ENCODE measurements at regions of chr16 and their contacts with region 1.

Region 1: GRCh38 chr16:78770353-78771091 is 671.1 kb downstream of the WWOX start:
- DNase-seq: peak; percentile 88
- H3K4me3 Mint-ChIP-seq: no peak overlapping the region
- H3K27ac Mint-ChIP-seq: peak overlapping the region; percentile 29
- H3K4me1 Mint-ChIP-seq: peaks cover 74% of the 10 kb centered on the region
- H3K27me3 Mint-ChIP-seq: no peaks in the 10 kb centered on the region

Region 2: DNA sequence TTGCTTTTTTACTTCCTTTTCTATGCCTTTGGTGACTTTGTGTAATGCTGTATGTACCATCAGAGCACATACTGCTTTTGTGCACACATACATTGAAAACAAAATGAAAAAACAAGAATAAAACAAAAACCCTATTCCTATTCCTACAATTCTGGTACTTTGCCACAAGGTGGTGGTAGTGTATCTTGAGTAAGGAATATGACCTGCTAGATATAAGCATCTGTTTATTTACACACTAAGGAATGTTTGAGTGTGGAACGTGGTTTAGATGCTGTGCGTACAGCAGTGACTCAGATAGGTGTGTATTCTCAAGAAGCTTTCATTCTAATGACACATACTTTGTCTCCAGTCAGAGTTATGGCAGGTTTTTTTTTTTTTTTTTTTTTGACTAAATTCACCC is 64.8 kb before region 1 on chr16:
- CTCF ChIA-PET with region 1: interaction called, 50 read pairs
- POLR2A ChIA-PET with region 1: interaction called, 16 read pairs
- DNase-seq: peak; percentile 27
- H3K4me3 Mint-ChIP-seq: no peak overlapping the region
- H3K27ac Mint-ChIP-seq: peak overlapping the region; percentile 41
- H3K4me1 Mint-ChIP-seq: peaks cover 13% of the 10 kb centered on the region
- H3K27me3 Mint-ChIP-seq: no peaks in the 10 kb centered on the region

Region 3: GRCh38 chr16:78742501-78743283 is 27.8 kb before region 1 on chr16:
- CTCF ChIA-PET with region 1: interaction called, 3 read pairs
- POLR2A ChIA-PET with region 1: interaction called, 14 read pairs
- DNase-seq: peak; percentile 90
- H3K4me3 Mint-ChIP-seq: peak overlapping the region; percentile 72
- H3K27ac Mint-ChIP-seq: peak overlapping the region; percentile 96
- H3K4me1 Mint-ChIP-seq: peaks cover 27% of the 10 kb centered on the region
- H3K27me3 Mint-ChIP-seq: no peaks in the 10 kb centered on the region

Region 4: GRCh38 chr16:78817200-78817739 is 46.7 kb after region 1 on chr16:
- CTCF ChIA-PET with region 1: no interaction called
- POLR2A ChIA-PET with region 1: no interaction called
- DNase-seq: no peak
- H3K4me3 Mint-ChIP-seq: no peak overlapping the region
- H3K27ac Mint-ChIP-seq: no peak overlapping the region
- H3K4me1 Mint-ChIP-seq: peaks cover 3% of the 10 kb centered on the region
- H3K27me3 Mint-ChIP-seq: no peaks in the 10 kb centered on the region

Measured in activated CD4-positive, alpha-beta memory T cell treated with anti-CD3 and anti-CD28 coated beads, Interleukin-2, amount 10 ng/mL, durations not matched to agents 7 days and 5 days (primary cell).